Activated T-helper 2 cell treated with anti-CD3 and anti-CD28 coated beads, Interferon-gamma antibody, Interleukin-2, Interleukin-4, amounts not matched to agents 10 μg/mL and 5 μg/mL and 100 μg/mL, durations not matched to agents 14 hours and 24 hours and 36 hours (primary cell): ENCODE measurements at regions of chr6 and their contacts with region 1.

Region 1: DNA sequence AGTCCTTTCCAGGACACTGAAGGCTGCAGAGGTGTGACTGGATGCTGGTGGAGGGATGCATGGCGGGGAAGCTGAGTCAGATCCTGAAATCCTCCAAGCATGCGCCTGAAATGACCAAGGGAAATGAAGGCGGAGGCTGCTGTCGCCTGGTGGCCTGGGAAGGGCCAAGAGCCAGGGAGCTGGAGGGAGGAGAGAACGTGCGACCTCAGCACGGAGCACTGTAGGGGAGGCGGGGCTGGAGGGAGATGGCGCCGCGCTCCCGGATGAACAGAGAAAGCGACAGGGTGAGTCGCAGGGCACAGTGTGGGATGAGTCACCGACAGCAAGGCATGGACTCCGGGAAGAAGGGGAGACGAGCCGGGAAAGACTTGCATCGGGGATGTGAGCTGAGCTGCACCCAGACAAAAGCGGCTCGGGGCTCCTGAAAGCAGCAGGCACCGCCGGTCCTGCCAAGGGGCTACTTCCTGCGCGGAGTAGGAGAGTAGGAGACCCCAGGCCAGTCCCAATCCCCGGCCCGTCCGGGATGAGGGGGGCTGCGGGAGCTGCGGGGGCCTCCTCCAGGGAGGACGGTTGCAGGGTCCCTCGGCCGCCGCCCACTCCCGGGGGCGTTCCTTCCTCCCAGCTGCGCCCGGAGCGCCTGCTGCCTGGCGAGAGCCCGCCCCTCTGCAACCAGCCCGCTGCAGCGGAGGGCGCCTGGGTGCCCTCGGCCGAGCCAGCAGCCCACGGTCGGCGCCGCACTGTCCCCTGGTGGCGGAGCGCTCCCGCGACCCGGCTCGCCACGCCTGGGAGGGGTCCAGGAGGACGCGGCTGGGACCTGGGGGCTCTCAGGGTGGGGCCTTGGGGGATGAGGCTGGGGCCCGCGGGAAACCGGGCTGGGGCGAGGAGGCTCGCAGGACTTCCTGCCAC is 11.0 kb upstream of the NQO2 start:
- DNase-seq: peak; percentile 74
- H3K4me3 Mint-ChIP-seq: peak overlapping the region; percentile 93
- H3K27ac Mint-ChIP-seq: peak overlapping the region; percentile 97
- H3K4me1 Mint-ChIP-seq: peaks cover 21% of the 10 kb centered on the region
- H3K27me3 Mint-ChIP-seq: peaks cover 3% of the 10 kb centered on the region

Region 2: GRCh38 chr6:2765166-2765895 is 223.3 kb before region 1 on chr6 and contains the start of gene WRNIP1:
- intact Hi-C with region 1: loop called (anchors 1 kb)
- DNase-seq: peak; percentile 96
- H3K4me3 Mint-ChIP-seq: peak within 1 kb of the TSS; percentile 90
- H3K27ac Mint-ChIP-seq: peak within 1 kb of the TSS; percentile 98
- H3K4me1 Mint-ChIP-seq: peaks cover 47% of the 10 kb centered on the region
- H3K27me3 Mint-ChIP-seq: no peaks in the 10 kb centered on the region
- total RNA-seq, gene WRNIP1: 47.2 and 47.8 TPM in 2 replicates

Region 3: DNA sequence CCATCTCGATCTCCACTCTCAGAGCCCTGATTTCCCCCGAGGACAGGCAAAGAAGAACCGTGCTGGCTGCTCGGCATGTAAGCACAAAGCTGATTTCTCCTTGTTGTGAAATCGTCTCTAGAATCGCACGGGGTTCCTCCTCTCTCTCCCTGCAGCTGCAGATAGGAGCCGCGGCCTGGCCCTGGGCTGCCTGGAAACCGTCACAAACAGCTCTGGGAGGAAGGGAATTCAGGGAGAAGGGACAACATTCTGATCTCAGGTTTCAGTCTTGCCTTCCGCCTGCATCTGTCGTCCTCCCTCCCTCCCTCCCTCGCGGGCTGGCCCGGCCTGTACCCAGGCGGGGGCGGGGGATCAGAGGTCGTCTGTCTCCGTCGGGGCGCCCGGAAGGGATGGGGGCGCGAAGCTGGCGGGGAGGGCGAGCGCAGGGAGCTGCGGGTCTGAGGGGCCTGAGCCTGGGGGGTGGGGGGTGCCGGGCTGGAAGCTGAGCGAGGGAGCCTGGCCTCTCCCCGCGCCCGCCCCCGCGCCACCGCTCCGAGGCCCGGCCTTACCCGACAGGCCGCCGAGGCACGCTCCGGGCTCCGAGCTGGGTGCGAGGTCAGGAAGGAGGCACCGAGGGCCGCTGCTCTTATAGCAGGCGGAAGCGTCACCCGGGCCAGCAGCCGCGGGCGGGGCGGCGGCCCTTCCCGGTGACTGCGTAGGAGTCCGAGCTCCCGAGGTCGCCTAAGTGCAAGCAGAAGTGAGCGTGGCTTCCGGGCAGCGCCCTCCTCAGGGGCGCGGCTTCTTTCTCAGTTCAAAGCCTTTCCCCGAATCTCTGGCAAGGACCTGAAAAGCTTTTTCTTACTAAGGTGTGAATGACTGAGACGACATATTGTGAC is 147.2 kb before region 1 on chr6 and contains the start of gene SERPINB1:
- intact Hi-C with region 1: loop called (anchors 1 kb)
- DNase-seq: peak; percentile 76
- H3K4me3 Mint-ChIP-seq: peak within 1 kb of the TSS; percentile 89
- H3K27ac Mint-ChIP-seq: peak within 1 kb of the TSS; percentile 89
- H3K4me1 Mint-ChIP-seq: peaks cover 50% of the 10 kb centered on the region
- H3K27me3 Mint-ChIP-seq: no peaks in the 10 kb centered on the region
- total RNA-seq, gene SERPINB1: 102 and 103 TPM in 2 replicates

Region 4: DNA sequence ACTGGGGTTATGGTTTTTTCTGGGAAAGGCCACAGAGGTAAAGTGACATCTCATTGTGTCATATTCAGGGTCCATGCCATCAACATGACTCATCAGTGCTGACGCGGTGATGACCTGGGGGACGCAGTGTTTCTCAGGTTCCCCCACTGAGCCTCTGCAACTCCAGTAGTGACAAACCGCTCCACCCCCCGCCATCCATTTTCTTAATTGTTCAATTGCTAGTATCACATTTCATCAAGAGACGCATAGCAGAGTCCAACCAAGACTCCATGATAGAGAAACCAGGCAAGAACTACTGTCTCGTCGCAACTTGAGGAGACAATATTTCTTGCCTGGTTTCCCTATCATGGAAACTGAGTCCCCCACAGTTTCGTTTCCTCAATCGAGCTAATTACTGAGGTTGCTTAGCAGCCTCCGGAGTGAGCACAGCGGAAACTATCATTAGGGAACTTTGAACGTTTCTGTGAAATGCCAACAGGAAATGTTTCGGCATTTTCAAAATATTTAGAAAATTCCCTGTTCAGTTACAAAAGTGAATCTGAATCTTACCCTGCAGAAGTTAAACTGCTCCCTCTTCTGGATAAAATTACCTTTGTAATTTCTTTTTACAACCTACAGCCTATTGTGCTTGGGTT is 134.8 kb before region 1 on chr6:
- intact Hi-C with region 1: loop called (anchors 2 kb)
- DNase-seq: no peak
- H3K4me3 Mint-ChIP-seq: peak overlapping the region; percentile 43
- H3K27ac Mint-ChIP-seq: peak overlapping the region; percentile 99
- H3K4me1 Mint-ChIP-seq: peaks cover 68% of the 10 kb centered on the region
- H3K27me3 Mint-ChIP-seq: no peaks in the 10 kb centered on the region

Region 5: GRCh38 chr6:2952557-2953095 is 36.1 kb before region 1 on chr6:
- intact Hi-C with region 1: loop called (anchors 1 kb)
- DNase-seq: peak; percentile 53
- H3K4me3 Mint-ChIP-seq: peak overlapping the region; percentile 57
- H3K27ac Mint-ChIP-seq: peak overlapping the region; percentile 86
- H3K4me1 Mint-ChIP-seq: peaks cover 19% of the 10 kb centered on the region
- H3K27me3 Mint-ChIP-seq: no peaks in the 10 kb centered on the region

Region 6: DNA sequence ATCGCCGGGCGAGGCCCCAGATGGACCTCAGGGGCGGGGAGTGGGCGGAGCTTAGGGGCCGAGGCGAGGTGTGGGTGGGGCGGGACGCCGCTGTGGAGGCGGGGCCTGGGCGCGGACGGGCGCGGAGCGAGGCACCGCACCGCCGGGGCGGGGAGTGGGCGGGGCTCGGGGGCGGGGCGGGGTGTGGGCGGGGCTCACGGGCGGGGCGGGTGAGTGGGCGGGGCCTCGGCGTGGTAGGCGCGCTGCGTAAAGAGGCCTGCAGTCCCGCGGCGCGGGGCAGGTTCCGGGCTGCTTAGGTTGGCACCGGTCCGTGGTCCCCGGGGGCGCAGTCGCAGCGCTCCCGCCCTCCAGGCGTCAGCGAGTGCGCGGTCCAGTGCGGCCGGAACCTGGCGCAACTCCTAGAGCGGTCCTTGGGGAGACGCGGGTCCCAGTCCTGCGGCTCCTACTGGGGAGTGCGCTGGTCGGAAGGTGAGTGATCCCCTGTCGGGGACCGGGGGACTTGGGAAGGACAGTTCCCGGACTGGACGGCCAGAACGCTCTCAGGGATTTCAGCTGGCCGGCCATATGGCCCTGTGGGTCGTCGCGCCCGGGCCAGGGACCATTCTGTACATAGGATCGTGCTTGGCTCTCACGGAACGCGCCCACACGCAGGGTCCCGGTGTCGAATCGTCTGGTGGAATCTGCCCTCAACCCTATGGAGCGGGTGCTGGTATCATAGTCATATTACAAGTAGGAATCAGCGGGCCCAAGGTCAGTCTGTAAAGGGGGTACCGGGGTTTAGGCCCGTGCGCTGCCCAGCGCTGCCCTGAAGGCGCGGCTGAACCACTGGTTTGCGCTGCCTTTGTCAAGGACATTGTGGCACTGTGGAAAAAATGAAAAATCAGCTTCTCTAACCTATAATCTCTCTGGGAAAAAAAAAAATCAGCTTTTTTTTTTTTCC is 11.2 kb after region 1 on chr6 and contains the start of gene NQO2:
- intact Hi-C with region 1: loop called (anchors 1 kb)
- DNase-seq: peak; percentile 86
- H3K4me3 Mint-ChIP-seq: peak within 1 kb of the TSS; percentile 90
- H3K27ac Mint-ChIP-seq: peak within 1 kb of the TSS; percentile 91
- H3K4me1 Mint-ChIP-seq: peaks cover 24% of the 10 kb centered on the region
- H3K27me3 Mint-ChIP-seq: no peaks in the 10 kb centered on the region
- total RNA-seq, gene NQO2: 42.5 and 45.6 TPM in 2 replicates